Panc1 (cell line): ENCODE measurements at regions of chr6 and their contacts with region 1.

Region 1: GRCh38 chr6:30178837-30179236 is 15.5 kb downstream of the TRIM15 start:
- DNase-seq: no peak
- ATAC-seq: no peak
- H3K4me3 ChIP-seq: no peak overlapping the region
- H3K27ac ChIP-seq: no peak overlapping the region
- H3K4me1 ChIP-seq: no peaks in the 10 kb centered on the region
- H3K27me3 ChIP-seq: peaks cover 13% of the 10 kb centered on the region; the same call in 1 of the 2 replicates
- CTCF ChIP-seq: no peak

Region 2: GRCh38 chr6:30150671-30151395 is 28.0 kb before region 1 on chr6:
- CTCF ChIA-PET with region 1: no interaction called
- POLR2A ChIA-PET with region 1: no interaction called
- in situ Hi-C with region 1: no loop called
- intact Hi-C with region 1: no loop called
- DNase-seq: no peak
- ATAC-seq: no peak
- H3K4me3 ChIP-seq: no peak overlapping the region
- H3K27ac ChIP-seq: no peak overlapping the region
- H3K4me1 ChIP-seq: no peaks in the 10 kb centered on the region
- H3K27me3 ChIP-seq: peaks cover 8% of the 10 kb centered on the region
- CTCF ChIP-seq: no peak

Region 3: GRCh38 chr6:30424549-30424948 is 245.7 kb after region 1 on chr6:
- CTCF ChIA-PET with region 1: no interaction called
- POLR2A ChIA-PET with region 1: no interaction called
- in situ Hi-C with region 1: no loop called
- intact Hi-C with region 1: no loop called
- DNase-seq: no peak
- ATAC-seq: no peak
- H3K4me3 ChIP-seq: no peak overlapping the region
- H3K27ac ChIP-seq: no peak overlapping the region
- H3K4me1 ChIP-seq: no peaks in the 10 kb centered on the region
- H3K27me3 ChIP-seq: peaks cover 7% of the 10 kb centered on the region
- CTCF ChIP-seq: no peak

Region 4: GRCh38 chr6:30447237-30447636 is 268.4 kb after region 1 on chr6:
- CTCF ChIA-PET with region 1: no interaction called
- POLR2A ChIA-PET with region 1: interaction called, 13 read pairs
- in situ Hi-C with region 1: no loop called
- intact Hi-C with region 1: no loop called
- DNase-seq: no peak
- ATAC-seq: no peak
- H3K4me3 ChIP-seq: no peak overlapping the region
- H3K27ac ChIP-seq: no peak overlapping the region
- H3K4me1 ChIP-seq: no peaks in the 10 kb centered on the region
- H3K27me3 ChIP-seq: peaks cover 49% of the 10 kb centered on the region
- CTCF ChIP-seq: peak; percentile 35